Body of pancreas (tissue), 4 donors: ENCODE measurements at regions of chr15 and their contacts with region 1.

Region 1: DNA sequence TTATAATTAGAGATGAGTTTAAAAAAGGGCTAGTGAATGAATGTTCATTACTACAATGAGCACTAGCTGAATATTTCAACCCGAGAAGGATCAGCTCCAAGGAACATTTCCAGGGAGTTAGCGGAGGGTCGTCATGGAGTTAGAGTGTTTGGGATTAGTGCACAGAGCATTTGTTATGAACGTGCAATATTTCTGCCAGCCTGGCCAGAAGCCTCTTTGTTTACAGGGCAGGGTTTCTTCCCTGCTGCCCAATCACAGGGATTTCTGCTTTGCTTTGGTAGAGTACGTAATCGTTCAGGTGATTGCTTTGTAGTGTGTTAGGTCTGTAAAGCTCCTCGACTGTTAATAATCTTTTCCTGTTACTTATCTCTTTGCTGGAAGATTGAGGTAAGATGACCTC is 5.9 kb downstream of the CGNL1 start:
- DNase-seq: peak; percentile 59 to 75 (median 68)
- ATAC-seq: peak; percentile 87
- H3K4me3 ChIP-seq: no peak overlapping the region
- H3K27ac ChIP-seq: peak overlapping the region; percentile 45 to 75 (median 70)
- H3K4me1 ChIP-seq: peaks cover 94% of the 10 kb centered on the region
- H3K27me3 ChIP-seq: no peaks in the 10 kb centered on the region
- CTCF ChIP-seq: peak in 1 of 7 experiments; percentile 6
- POLR2A ChIP-seq: peak in 2 of 3 donors; percentile 30 to 40

Region 2: GRCh38 chr15:57440799-57441198 is 58.6 kb after region 1 on chr15:
- intact Hi-C with region 1: loop called (anchors 10 kb)
- DNase-seq: no peak
- ATAC-seq: peak; percentile 66
- H3K4me3 ChIP-seq: no peak overlapping the region
- H3K27ac ChIP-seq: peak overlapping the region; percentile 20 to 67 (median 30)
- H3K4me1 ChIP-seq: peaks cover 21% of the 10 kb centered on the region
- H3K27me3 ChIP-seq: no peaks in the 10 kb centered on the region
- CTCF ChIP-seq: no peak
- POLR2A ChIP-seq: no peak